ENCODE measurements at regions of chr2 and their contacts with region 1.

Region 1: GRCh38 chr2:171687287-171688128 is at the start of gene DYNC1I2:
- DNase-seq: peak; percentile 87
- H3K4me3 ChIP-seq: peak within 1 kb of the TSS; percentile 87
- H3K27ac ChIP-seq: peak within 1 kb of the TSS; percentile 38
- H3K4me1 ChIP-seq: peaks cover 9% of the 10 kb centered on the region
- CTCF ChIP-seq: no peak
- total RNA-seq, gene DYNC1I2: 42.3 and 57.8 TPM in 2 replicates

Region 2: GRCh38 chr2:171703574-171704347 is 16.3 kb after region 1 on chr2:
- CTCF ChIA-PET with region 1: interaction called, 3 read pairs
- POLR2A ChIA-PET with region 1: interaction called, 12 read pairs
- intact Hi-C with region 1: no loop called
- DNase-seq: peak; percentile 56
- H3K4me3 ChIP-seq: no peak overlapping the region
- H3K27ac ChIP-seq: no peak overlapping the region
- H3K4me1 ChIP-seq: peaks cover 9% of the 10 kb centered on the region
- CTCF ChIP-seq: peak; percentile 81

Region 3: GRCh38 chr2:171864357-171864985 is 177.0 kb after region 1 on chr2:
- CTCF ChIA-PET with region 1: no interaction called
- POLR2A ChIA-PET with region 1: no interaction called
- intact Hi-C with region 1: no loop called
- DNase-seq: no peak
- H3K4me3 ChIP-seq: no peak overlapping the region
- H3K27ac ChIP-seq: no peak overlapping the region
- H3K4me1 ChIP-seq: no peaks in the 10 kb centered on the region
- CTCF ChIP-seq: no peak